Heart right ventricle (tissue), 16 donors: ENCODE measurements at regions of chr3 and their contacts with region 1.

Region 1: DNA sequence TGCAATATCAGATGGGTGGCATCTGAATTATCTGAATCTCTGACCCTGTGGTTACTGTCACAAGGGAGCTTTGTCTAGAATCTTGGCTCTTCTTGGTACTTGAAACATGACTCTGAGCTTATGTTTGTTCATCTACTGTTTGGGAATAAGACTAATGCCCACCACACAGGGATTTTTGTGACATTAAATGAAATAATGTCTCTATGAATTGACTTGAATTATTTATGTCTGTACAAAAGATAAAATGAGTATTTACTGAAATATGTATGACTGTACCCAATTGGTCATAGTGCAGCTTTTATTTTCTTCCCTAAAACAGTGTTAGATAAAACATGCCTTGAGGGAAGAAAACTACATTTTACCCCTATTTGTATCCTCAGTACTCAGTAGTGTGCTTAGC is 87.9 kb upstream of the ZPLD1 start:
- DNase-seq: no peak
- ATAC-seq: no peak
- H3K4me3 ChIP-seq: no peak overlapping the region
- H3K27ac ChIP-seq: no peak overlapping the region
- H3K4me1 ChIP-seq: no peaks in the 10 kb centered on the region
- H3K27me3 ChIP-seq: no peaks in the 10 kb centered on the region
- CTCF ChIP-seq: no peak

Region 2: DNA sequence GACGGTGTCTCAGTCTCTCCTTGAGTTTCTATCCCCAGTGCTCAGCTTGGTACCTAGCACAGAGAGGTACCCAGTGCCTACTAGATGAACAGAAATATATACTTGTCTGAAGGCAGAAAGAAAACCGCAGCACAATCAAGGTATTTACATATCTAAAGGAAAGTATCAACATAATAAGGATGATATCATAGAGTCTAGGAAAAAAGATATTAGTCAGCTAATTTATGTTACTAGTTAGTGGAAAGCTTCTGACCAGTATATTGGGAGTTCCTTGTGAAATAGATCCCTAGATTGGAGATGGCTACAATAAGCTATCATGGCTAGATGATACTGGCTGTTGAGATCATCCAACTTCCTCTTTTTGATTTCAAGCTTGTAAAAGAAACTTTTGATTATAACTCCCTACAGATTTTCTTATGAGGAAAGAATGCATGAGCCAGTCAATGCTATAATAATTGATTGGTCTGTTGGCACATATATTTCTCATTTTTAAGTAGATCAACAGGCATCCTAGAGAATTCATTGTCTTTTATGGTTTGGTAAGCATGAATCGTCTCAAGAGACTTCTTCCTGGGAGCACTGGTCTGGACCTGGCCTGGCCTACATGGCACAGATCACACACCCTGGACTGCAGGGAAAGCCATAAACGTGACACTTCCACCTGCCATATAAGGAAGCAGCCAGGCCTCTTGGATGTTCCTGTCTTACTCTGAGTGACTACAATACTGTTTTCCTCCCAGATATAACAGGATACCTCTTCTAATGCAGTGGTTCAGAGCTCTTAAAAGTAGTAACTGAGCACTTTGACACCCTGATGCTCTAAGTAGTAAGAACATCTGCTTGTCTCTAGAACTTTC is 1087.2 kb before region 1 on chr3:
- intact Hi-C with region 1: loop called in 1 of 10 experiments (anchors 10 kb)
- DNase-seq: no peak
- ATAC-seq: no peak
- H3K4me3 ChIP-seq: no peak overlapping the region
- H3K27ac ChIP-seq: no peak overlapping the region
- H3K4me1 ChIP-seq: peaks cover 0 to 11% (median 4%) of the 10 kb centered on the region in 9 donors
- H3K27me3 ChIP-seq: no peaks in the 10 kb centered on the region
- CTCF ChIP-seq: no peak

Region 3: DNA sequence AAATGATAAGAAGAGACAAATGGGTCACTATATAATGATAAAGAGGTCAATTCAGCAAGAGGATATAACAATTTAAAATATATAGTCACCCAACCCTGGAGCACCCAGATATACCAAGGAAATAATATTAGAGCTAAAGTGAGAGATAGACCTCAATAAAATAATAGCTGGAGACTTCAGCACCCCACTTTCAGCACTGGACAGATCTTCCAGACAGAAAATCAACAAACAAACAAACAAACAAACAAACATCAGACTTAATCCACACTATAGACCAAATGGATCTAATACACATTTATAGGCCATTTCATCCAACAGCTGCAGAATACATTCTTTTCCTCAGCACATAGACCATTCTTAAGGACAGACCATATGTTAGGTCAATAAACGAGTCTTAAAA is 913.2 kb before region 1 on chr3:
- intact Hi-C with region 1: no loop called
- DNase-seq: no peak
- ATAC-seq: no peak
- H3K4me3 ChIP-seq: no peak overlapping the region
- H3K27ac ChIP-seq: no peak overlapping the region
- H3K4me1 ChIP-seq: no peaks in the 10 kb centered on the region
- H3K27me3 ChIP-seq: no peaks in the 10 kb centered on the region
- CTCF ChIP-seq: no peak